ENCODE measurements at regions of chr12 and their contacts with region 1.

Region 1: DNA sequence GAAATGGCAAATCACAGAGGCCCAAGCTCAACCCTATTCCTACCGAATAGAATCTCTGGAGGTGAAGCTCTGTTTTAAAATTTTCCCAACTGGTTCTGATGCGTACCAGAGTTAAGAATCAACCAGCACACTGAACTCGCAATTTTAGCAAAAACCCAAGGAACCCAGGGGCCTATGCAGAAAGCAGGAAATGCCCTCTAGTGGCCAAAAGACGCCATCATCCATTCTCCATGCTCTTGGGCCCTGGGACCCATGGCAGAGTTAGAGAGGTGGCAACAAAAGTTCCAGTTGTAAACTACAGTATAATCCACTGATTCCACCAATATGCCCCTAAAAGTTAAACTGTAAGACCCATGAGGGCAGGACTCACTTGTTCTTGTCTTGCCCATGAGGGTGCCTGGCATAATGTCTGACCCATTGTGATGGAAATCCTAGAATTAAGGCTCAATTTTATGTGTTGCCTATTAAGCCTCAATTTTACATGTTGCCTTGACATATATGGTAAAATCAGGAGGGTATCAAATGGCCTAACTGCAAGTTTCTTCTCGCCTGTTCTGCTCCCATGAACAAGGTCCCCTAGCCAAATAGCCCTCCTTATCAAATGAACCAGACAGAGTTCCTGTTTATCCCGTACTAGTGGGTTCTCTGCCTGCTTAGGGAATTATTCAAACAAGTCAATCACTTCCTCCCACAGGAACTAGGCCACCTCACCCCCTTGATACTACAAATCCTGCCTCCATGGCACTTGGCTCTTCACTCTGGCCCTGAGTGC is 137.5 kb upstream of the CPM start:
- DNase-seq: peak; percentile 83
- H3K4me3 ChIP-seq: no peak overlapping the region
- H3K27ac ChIP-seq: no peak overlapping the region
- H3K4me1 ChIP-seq: peaks cover 5% of the 10 kb centered on the region
- H3K27me3 ChIP-seq: no peaks in the 10 kb centered on the region
- CTCF ChIP-seq: peak; percentile 93

Region 2: DNA sequence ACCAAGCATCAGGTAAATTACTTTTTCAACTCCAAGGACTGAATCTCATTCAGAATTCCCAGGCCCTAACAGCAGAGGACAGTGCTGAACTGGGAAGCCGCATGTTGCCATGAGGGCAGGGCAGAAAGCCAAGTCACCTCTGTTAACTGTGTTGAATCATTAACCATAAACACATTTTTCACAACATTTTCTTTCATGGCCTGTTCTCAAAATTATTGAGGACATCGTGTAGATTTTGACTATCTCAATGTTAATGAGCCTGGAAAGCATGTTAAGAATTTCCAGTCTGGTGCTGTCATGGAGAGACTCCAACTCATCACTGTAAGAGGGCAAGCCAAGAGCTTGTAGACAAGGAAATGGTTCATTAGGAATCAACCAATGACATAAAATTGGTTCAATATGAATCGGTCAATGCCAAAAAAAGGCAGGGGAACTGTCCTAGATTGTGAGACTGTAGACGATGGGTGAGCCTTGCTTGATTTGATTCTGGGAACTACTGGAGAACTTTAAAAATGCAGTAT is 171.2 kb before region 1 on chr12:
- intact Hi-C with region 1: loop called (anchors 10 kb)
- DNase-seq: peak; percentile 74
- H3K4me3 ChIP-seq: no peak overlapping the region
- H3K27ac ChIP-seq: no peak overlapping the region
- H3K4me1 ChIP-seq: no peaks in the 10 kb centered on the region
- H3K27me3 ChIP-seq: no peaks in the 10 kb centered on the region
- CTCF ChIP-seq: peak; percentile 58

Region 3: DNA sequence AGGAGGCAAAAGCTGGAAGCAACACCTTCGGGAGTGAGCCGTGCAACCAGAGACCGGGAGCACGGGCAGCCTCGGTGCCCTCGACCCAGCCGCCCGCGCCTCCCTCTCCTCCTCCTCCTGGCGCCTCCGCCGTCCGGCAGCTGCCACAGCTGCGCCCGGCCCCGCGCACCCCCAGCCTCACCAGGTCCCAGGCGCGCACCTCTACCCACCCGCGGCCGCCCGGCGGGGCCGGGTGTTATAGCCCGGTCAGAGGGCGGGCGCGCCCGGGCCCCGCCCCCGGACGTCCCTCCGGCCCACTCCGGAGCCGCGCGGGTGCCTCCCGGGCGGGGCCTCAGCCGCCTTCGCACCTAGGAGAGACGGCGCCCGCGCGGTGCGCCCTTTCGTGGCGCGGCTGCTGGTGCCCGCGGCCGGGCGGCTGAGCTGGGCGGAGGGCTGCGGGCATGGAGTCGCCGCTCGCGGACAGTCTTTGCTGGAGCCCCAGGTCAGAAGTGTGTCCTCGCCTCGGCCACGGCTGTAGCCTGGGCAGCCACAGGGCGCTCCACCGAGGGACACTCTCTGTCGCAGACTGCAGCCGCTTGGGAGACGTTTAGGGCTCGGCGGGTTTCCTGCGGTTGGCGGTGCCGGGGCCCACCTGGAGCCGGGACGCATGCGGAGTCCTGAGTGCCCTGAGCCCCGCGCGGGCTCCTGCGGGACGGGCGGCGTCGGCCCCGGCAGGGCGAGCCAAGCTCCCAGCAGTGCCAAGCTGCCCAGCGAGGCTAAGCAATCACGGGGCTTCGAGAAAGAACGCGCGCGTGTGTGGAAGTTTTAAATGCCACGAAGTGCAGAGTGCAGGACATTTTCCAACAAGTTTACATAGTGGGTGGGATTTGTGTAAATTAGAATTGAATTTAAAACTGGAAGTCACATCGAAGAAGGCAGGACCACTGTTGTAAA is 137.3 kb before region 1 on chr12 and contains the start of gene CPM:
- intact Hi-C with region 1: no loop called
- DNase-seq: peak; percentile 86
- H3K4me3 ChIP-seq: peak within 1 kb of the TSS; percentile 74
- H3K27ac ChIP-seq: peak within 1 kb of the TSS; percentile 62
- H3K4me1 ChIP-seq: no peaks in the 10 kb centered on the region
- H3K27me3 ChIP-seq: no peaks in the 10 kb centered on the region
- CTCF ChIP-seq: no peak
- total RNA-seq, gene CPM: 30.0 to 40.3 TPM

Region 4: GRCh38 chr12:69007101-69007854 is 63.2 kb before region 1 on chr12:
- intact Hi-C with region 1: loop called (anchors 5 kb)
- DNase-seq: peak; percentile 62
- H3K4me3 ChIP-seq: no peak overlapping the region
- H3K27ac ChIP-seq: peak overlapping the region; percentile 48
- H3K4me1 ChIP-seq: peaks cover 30% of the 10 kb centered on the region
- H3K27me3 ChIP-seq: no peaks in the 10 kb centered on the region
- CTCF ChIP-seq: no peak